CD4-positive, alpha-beta memory T cell (primary cell): ENCODE measurements at regions of chr17 and their contacts with region 1.

Region 1: DNA sequence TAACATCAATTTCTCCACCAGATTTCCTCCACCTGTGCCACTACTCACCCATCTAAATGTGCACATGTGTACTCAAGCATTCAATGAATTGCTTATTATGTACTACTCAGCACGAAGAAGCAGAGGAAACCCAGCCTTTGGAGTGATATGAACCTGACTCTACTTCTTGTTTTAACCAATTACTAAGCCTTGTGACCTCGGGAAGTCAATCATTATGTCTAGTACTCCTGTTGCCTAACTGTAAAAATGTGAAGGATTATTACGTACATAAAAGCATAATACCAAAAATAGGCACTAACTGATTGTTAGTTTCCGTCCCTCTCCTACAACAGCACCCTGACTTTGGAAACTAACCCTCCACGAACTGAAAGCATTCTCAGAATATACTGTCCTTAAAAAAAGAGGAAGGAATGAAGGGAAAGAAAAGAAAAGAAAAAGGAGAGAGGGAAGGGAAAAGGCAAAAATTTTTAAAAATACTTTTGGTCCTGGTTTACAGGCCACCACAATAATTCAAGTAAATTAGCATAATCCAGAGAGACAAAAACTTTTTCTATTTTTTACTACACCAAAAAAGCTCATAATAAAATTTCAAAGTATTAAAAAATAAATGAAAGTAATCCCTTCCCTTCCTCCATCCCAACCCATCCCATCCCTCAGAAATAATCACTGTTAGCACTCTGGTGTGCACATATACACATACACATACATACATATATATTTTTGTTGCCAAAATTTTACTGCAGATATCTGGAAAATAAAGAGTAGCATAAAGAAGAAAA is 53.6 kb downstream of the KANSL1 start:
- DNase-seq: no peak
- H3K4me3 ChIP-seq: no peak overlapping the region
- H3K4me3 Mint-ChIP-seq: peak overlapping the region in 7 of 8 donors; percentile 6 to 70 (median 34)
- H3K27ac ChIP-seq: no peak overlapping the region
- H3K27ac Mint-ChIP-seq: peak overlapping the region in 5 of 7 donors; percentile 53 to 73 (median 59)
- H3K4me1 ChIP-seq: peaks cover 95% of the 10 kb centered on the region
- H3K4me1 Mint-ChIP-seq: peaks cover 75 to 98% (median 88%) of the 10 kb centered on the region in 4 donors
- H3K27me3 ChIP-seq: no peaks in the 10 kb centered on the region
- H3K27me3 Mint-ChIP-seq: no peaks in the 10 kb centered on the region

Region 2: GRCh38 chr17:45976755-45977505 is 162.7 kb before region 1 on chr17:
- CTCF ChIA-PET with region 1: no interaction called
- POLR2A ChIA-PET with region 1: no interaction called
- intact Hi-C with region 1: no loop called
- DNase-seq: no peak
- H3K4me3 ChIP-seq: no peak overlapping the region
- H3K4me3 Mint-ChIP-seq: no peak overlapping the region
- H3K27ac ChIP-seq: no peak overlapping the region
- H3K27ac Mint-ChIP-seq: no peak overlapping the region
- H3K4me1 ChIP-seq: no peaks in the 10 kb centered on the region
- H3K4me1 Mint-ChIP-seq: no peaks in the 10 kb centered on the region
- H3K27me3 ChIP-seq: no peaks in the 10 kb centered on the region
- H3K27me3 Mint-ChIP-seq: no peaks in the 10 kb centered on the region

Region 3: GRCh38 chr17:46082257-46082656 is 57.4 kb before region 1 on chr17:
- CTCF ChIA-PET with region 1: no interaction called
- POLR2A ChIA-PET with region 1: no interaction called
- intact Hi-C with region 1: loop called (anchors 5 kb)
- DNase-seq: no peak
- H3K4me3 ChIP-seq: no peak overlapping the region
- H3K4me3 Mint-ChIP-seq: peak overlapping the region in 1 of 8 donors; percentile 5
- H3K27ac ChIP-seq: no peak overlapping the region
- H3K27ac Mint-ChIP-seq: peak overlapping the region in 6 of 7 donors; percentile 23 to 84 (median 64)
- H3K4me1 ChIP-seq: peaks cover 17% of the 10 kb centered on the region
- H3K4me1 Mint-ChIP-seq: peaks cover 37 to 70% (median 48%) of the 10 kb centered on the region in 4 donors
- H3K27me3 ChIP-seq: no peaks in the 10 kb centered on the region
- H3K27me3 Mint-ChIP-seq: no peaks in the 10 kb centered on the region

Region 4: GRCh38 chr17:46100590-46100989 is 39.0 kb before region 1 on chr17:
- CTCF ChIA-PET with region 1: no interaction called
- POLR2A ChIA-PET with region 1: no interaction called
- intact Hi-C with region 1: loop called (anchors 5 kb)
- DNase-seq: no peak
- H3K4me3 ChIP-seq: no peak overlapping the region
- H3K4me3 Mint-ChIP-seq: peak overlapping the region in 3 of 8 donors; percentile 13 to 57 (median 37)
- H3K27ac ChIP-seq: no peak overlapping the region
- H3K27ac Mint-ChIP-seq: peak overlapping the region in 5 of 7 donors; percentile 9 to 87 (median 78)
- H3K4me1 ChIP-seq: peaks cover 79% of the 10 kb centered on the region
- H3K4me1 Mint-ChIP-seq: peaks cover 49 to 82% (median 70%) of the 10 kb centered on the region in 4 donors
- H3K27me3 ChIP-seq: no peaks in the 10 kb centered on the region
- H3K27me3 Mint-ChIP-seq: no peaks in the 10 kb centered on the region